OCI-LY7 (cell line): ENCODE measurements at regions of chr4 and their contacts with region 1.

Region 1: GRCh38 chr4:3655963-3656362 is 110.2 kb upstream of the ADRA2C start:
- DNase-seq: no peak
- H3K4me3 ChIP-seq: peak overlapping the region; percentile 22
- H3K27ac ChIP-seq: peak overlapping the region; percentile 90
- H3K4me1 ChIP-seq: peaks cover 64% of the 10 kb centered on the region
- CTCF ChIP-seq: no peak

Region 2: GRCh38 chr4:3862640-3863420 is 206.9 kb after region 1 on chr4:
- CTCF ChIA-PET with region 1: interaction called, 12 read pairs
- POLR2A ChIA-PET with region 1: no interaction called
- intact Hi-C with region 1: no loop called
- DNase-seq: no peak
- H3K4me3 ChIP-seq: no peak overlapping the region
- H3K27ac ChIP-seq: no peak overlapping the region
- H3K4me1 ChIP-seq: no peaks in the 10 kb centered on the region
- CTCF ChIP-seq: no peak

Region 3: DNA sequence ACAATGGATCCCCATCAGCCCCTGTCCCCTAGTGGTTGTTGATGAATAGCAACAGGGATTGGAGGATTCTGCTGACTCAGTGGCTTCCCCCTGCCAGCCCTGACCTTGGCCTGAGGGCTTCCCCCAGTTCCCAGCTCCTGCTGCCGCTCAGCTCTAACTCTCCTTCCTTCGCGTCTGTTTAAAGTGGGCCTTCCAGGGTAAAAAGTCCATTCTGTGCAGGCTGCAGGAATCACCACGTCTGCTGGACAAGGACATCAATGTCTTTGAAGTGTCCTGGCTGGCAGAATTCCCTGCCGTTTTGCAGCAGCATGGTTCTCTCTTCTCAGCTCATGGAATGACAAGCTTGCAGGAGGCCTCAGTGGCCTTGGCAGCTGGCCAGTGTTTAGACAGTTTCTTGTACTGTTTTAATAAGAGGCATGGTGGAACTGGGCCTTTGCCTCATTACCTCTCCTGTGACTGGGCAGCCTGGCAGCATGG is 1038.4 kb after region 1 on chr4:
- CTCF ChIA-PET with region 1: no interaction called
- POLR2A ChIA-PET with region 1: no interaction called
- intact Hi-C with region 1: no loop called
- DNase-seq: no peak
- H3K4me3 ChIP-seq: no peak overlapping the region
- H3K27ac ChIP-seq: no peak overlapping the region
- H3K4me1 ChIP-seq: no peaks in the 10 kb centered on the region
- CTCF ChIP-seq: peak; percentile 48; the same call in 1 of the 2 replicates